ENCODE measurements at regions of chr11 and their contacts with region 1.

Region 1: DNA sequence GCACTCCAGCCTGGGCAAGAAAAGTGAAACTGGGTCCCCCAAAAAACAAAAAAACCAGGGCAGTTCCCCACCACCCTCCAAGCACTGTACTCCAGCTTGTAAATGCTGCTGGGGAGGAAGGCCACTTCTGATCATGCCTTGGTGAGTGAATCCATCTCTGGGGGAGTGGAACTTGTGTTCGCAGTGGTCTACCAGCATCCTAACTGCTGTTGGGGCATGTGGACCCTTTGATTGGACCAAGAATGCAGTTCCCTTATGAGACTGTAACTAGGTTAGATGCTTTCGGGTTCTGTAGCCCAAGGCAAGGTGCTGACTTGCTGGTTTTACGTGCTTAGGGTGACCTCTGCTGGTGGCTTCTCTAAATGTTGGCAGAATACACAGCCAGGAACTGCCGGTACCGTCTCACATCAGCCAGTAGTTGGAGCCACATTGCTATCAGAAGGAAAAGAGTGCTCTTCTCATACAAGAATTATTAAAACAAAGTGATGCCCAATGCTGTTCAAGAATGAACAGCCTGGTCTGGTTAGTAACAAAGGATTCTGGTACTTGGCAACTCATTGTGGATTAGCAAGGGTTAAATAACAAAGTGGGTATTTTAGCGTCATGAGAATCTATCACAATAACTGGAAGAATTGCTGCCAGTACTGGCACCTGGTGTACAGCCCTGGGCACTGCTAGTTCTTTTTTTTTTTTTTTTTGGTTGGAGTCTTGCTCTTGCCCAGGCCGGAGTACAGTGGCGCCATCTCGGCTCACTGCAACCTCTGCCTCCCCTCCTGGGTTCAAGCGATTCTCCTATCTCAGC is 13.0 kb downstream of the EIF1AD start:
- DNase-seq: peak; percentile 97
- H3K4me3 ChIP-seq: no peak overlapping the region
- H3K27ac ChIP-seq: no peak overlapping the region
- H3K4me1 ChIP-seq: no peaks in the 10 kb centered on the region
- H3K27me3 ChIP-seq: no peaks in the 10 kb centered on the region
- CTCF ChIP-seq: peak; percentile 86 to 99
- POLR2A ChIP-seq: no peak

Region 2: DNA sequence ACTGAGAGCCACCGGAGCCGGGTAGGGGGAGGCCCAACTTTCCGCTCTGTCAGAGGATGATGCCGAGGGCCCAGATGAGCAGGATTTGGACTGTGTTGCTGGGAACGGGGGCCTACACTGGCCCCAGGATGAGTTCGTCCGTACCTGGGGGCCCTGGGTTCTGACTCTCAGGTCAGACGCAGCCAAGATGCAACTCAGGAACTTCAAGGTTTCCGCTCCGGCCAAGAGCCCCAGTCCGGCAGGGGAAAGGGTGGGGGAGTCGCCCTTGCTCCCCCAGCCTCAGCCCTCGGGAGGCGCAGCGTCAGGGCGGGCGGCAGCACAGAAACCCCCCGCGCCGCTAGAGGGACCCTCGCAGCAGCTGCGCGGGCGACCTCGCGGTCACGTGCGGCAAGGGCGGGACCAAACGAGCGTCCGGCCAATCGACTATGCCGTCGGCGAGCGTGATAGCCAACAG is 975.3 kb before region 1 on chr11:
- CTCF ChIA-PET with region 1: no interaction called
- POLR2A ChIA-PET with region 1: no interaction called
- dilution Hi-C with region 1: no loop called
- intact Hi-C with region 1: no loop called
- DNase-seq: peak; percentile 92
- H3K4me3 ChIP-seq: peak overlapping the region; percentile 32 to 84 (median 59)
- H3K27ac ChIP-seq: peak overlapping the region; percentile 87
- H3K4me1 ChIP-seq: peaks cover 4% of the 10 kb centered on the region
- H3K27me3 ChIP-seq: no peaks in the 10 kb centered on the region
- CTCF ChIP-seq: peak in 1 of 2 donors; percentile 56
- POLR2A ChIP-seq: no peak

Region 3: GRCh38 chr11:65711785-65712632 is 277.0 kb before region 1 on chr11 and contains the start of gene KAT5:
- CTCF ChIA-PET with region 1: interaction called, 8 read pairs
- POLR2A ChIA-PET with region 1: no interaction called
- dilution Hi-C with region 1: no loop called
- intact Hi-C with region 1: loop called (anchors 1 kb)
- DNase-seq: peak; percentile 98
- H3K4me3 ChIP-seq: peak within 1 kb of the TSS; percentile 19 to 66 (median 49)
- H3K27ac ChIP-seq: peak within 1 kb of the TSS; percentile 89
- H3K4me1 ChIP-seq: peaks cover 6% of the 10 kb centered on the region
- H3K27me3 ChIP-seq: no peaks in the 10 kb centered on the region
- CTCF ChIP-seq: peak; percentile 93 to 97
- POLR2A ChIP-seq: no peak
- total RNA-seq, gene KAT5: 48.8 and 50.2 TPM in 2 replicates

Region 4: GRCh38 chr11:65859200-65859811 is 129.7 kb before region 1 on chr11:
- CTCF ChIA-PET with region 1: interaction called, 4 read pairs
- POLR2A ChIA-PET with region 1: no interaction called
- dilution Hi-C with region 1: no loop called
- intact Hi-C with region 1: loop called (anchors 1 kb)
- DNase-seq: peak; percentile 98
- H3K4me3 ChIP-seq: peak overlapping the region; percentile 21 to 76 (median 71)
- H3K27ac ChIP-seq: peak overlapping the region; percentile 77
- H3K4me1 ChIP-seq: peaks cover 41% of the 10 kb centered on the region
- H3K27me3 ChIP-seq: no peaks in the 10 kb centered on the region
- CTCF ChIP-seq: peak in 1 of 2 donors; percentile 22
- POLR2A ChIP-seq: peak; percentile 94

Region 5: DNA sequence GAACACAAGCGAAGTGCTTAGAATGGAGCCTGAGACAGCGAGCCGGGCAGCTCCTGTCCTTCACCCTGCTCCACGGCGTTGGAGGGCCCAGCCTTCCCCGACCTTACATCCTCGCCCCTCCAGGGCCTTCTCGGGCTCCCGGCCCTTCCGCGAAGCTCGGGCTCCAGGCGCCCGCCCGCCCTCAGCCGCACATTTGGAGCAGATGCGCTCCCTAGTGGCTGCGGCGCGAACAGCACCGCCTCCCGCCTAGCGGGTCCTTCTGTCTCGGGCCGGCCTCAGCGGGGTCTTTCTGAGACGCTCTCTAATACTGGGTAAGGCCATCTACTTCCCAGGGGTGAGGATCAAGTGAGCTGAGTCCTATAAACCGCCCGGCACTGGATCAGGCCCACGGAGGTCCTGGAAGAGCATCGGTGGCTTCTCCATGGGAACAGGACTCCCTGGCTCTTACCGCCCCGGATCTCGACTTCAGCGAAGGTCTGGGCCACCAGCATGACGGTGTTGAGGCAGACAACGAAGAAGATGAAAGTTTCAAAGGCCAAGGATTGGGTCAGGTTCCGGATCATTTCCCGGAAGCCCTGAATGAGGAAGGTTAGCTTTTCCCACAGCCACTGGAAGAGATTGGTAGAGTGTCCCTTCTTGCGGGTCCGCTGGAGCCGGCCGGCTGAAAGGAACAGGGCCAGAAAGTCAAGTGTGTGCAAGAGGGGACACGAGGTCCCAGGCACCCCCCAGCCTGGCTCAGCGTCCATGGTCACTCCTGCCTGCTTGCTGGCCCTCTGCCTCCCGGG is 33.6 kb after region 1 on chr11:
- CTCF ChIA-PET with region 1: interaction called, 13 read pairs
- POLR2A ChIA-PET with region 1: no interaction called
- dilution Hi-C with region 1: no loop called
- intact Hi-C with region 1: loop called (anchors 1 kb)
- DNase-seq: peak; percentile 67
- H3K4me3 ChIP-seq: no peak overlapping the region
- H3K27ac ChIP-seq: no peak overlapping the region
- H3K4me1 ChIP-seq: peaks cover 17% of the 10 kb centered on the region
- H3K27me3 ChIP-seq: no peaks in the 10 kb centered on the region
- CTCF ChIP-seq: peak; percentile 97 to 98
- POLR2A ChIP-seq: no peak

Measured in endothelial cell of umbilical vein (primary cell).